ENCODE measurements at regions of chr16 and their contacts with region 1.

Region 1: GRCh38 chr16:75519881-75520280 is 16.0 kb downstream of the CHST5 start:
- DNase-seq: no peak
- ATAC-seq: no peak

Region 2: GRCh38 chr16:75361936-75362335 is 157.9 kb before region 1 on chr16:
- intact Hi-C with region 1: no loop called
- DNase-seq: no peak
- ATAC-seq: no peak

Region 3: GRCh38 chr16:75471723-75472633 is 47.9 kb before region 1 on chr16:
- intact Hi-C with region 1: loop called (anchors 2 kb)
- DNase-seq: no peak
- ATAC-seq: peak; percentile 94

Region 4: GRCh38 chr16:75501108-75501758 is 18.6 kb before region 1 on chr16:
- intact Hi-C with region 1: loop called (anchors 2 kb)
- DNase-seq: no peak
- ATAC-seq: no peak

Region 5: DNA sequence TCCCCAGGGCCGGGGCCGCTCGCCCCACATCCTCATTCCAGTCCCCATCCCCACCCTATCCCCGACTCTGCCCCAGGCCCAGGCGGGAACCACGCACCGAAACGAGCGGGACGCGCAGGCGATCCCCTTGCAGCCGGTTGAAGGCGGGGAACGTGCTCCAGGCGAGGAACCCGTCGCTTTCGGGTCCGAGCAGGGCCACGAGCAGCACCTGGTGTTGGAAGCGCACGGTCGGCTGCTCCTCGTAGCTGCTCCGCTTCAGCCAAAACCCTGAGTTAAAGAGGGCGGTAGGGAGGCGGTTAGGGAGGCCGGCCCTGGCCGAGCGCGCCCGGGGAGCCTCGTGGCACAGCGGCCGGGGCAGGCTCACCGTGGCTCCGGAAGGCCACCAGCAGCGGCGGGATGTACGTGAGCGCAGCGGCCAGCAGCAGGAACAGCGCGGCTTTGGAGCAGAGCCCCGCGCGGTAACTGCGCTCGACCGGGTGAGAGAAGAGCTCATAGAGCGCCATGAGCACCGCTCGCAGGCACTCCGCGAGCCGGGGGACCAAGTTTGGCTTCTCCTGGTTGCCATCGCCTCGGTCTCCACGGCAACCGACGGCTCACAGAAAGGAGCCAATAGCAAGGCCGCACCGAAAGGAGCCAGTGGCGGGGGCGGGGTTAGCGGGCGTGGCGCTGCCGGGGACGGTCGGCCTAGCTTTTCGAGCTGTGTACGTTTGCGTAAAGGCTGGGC is 36.0 kb after region 1 on chr16 and contains the start of gene TMEM231:
- intact Hi-C with region 1: loop called (anchors 2 kb)
- DNase-seq: peak; percentile 100
- ATAC-seq: peak; percentile 97
- total RNA-seq, gene TMEM231: 4.4 TPM

Region 6: GRCh38 chr16:76360404-76360803 is 840.5 kb after region 1 on chr16:
- intact Hi-C with region 1: no loop called
- DNase-seq: no peak
- ATAC-seq: no peak